Activated CD4-positive, alpha-beta T cell treated with anti-CD3 and anti-CD28 coated beads for 36 hours (primary cell): ENCODE measurements at regions of chr1 and their contacts with region 1.

Region 1: GRCh38 chr1:160607011-160607671 is 27.8 kb upstream of the CD84 start:
- DNase-seq: peak; percentile 72
- ATAC-seq: peak; percentile 94
- H3K4me3 Mint-ChIP-seq: no peak overlapping the region
- H3K27ac Mint-ChIP-seq: peak overlapping the region; percentile 85
- H3K4me1 Mint-ChIP-seq: peaks cover 54% of the 10 kb centered on the region
- H3K27me3 Mint-ChIP-seq: no peaks in the 10 kb centered on the region

Region 2: GRCh38 chr1:160193091-160193819 is 413.9 kb before region 1 on chr1:
- CTCF ChIA-PET with region 1: no interaction called
- POLR2A ChIA-PET with region 1: no interaction called
- intact Hi-C with region 1: loop called in 1 of 2 experiments (anchors 5 kb)
- DNase-seq: peak; percentile 90
- ATAC-seq: peak; percentile 89
- H3K4me3 Mint-ChIP-seq: no peak overlapping the region
- H3K27ac Mint-ChIP-seq: no peak overlapping the region
- H3K4me1 Mint-ChIP-seq: no peaks in the 10 kb centered on the region
- H3K27me3 Mint-ChIP-seq: no peaks in the 10 kb centered on the region

Region 3: GRCh38 chr1:160428655-160429054 is 178.5 kb before region 1 on chr1:
- CTCF ChIA-PET with region 1: interaction called, 18 read pairs
- POLR2A ChIA-PET with region 1: no interaction called
- intact Hi-C with region 1: loop called (anchors 1 kb)
- DNase-seq: peak; percentile 60
- ATAC-seq: peak; percentile 51
- H3K4me3 Mint-ChIP-seq: peak overlapping the region; percentile 32
- H3K27ac Mint-ChIP-seq: peak overlapping the region; percentile 94
- H3K4me1 Mint-ChIP-seq: peaks cover 63% of the 10 kb centered on the region
- H3K27me3 Mint-ChIP-seq: no peaks in the 10 kb centered on the region

Region 4: DNA sequence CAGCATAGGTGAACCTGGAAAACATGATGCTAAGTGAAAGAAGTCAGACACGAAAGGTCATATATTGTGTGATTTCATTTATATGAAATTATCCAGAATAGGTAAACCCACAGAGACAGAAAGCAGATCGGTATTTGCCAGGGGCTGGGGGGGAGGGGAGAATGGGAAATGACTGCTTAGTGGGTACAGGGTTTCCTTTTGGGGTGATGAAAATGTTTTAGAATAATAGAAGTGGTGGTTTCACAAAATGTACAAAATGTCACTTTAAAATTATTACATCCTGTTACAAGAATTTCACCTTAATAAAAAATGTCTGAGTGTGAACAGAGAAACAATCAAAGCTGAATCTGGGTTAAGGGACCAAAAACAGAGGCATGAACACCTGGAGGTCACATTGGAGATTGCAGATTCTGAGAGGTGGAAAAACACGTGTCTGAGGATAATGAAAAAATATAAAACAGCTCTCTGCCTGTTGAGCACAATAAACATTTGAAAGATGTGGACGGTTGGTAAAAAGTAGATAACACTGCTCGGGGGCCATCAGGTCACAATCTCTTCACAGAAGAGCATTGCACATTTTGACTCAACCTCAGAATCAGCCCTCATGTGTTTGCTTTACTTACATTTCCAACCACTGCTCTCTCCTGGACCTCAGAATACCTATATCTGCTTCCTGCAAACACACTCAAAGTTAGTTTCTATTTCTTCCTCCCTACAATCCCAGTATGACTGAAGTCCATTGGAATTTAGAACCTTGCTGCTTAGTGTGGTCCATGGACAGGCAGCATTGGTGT is 87.3 kb before region 1 on chr1:
- CTCF ChIA-PET with region 1: interaction called, 4 read pairs
- POLR2A ChIA-PET with region 1: no interaction called
- intact Hi-C with region 1: loop called (anchors 1 to 2 kb)
- DNase-seq: peak; percentile 54
- ATAC-seq: peak; percentile 70
- H3K4me3 Mint-ChIP-seq: peak overlapping the region; percentile 97
- H3K27ac Mint-ChIP-seq: peak overlapping the region; percentile 98
- H3K4me1 Mint-ChIP-seq: peaks cover 83% of the 10 kb centered on the region
- H3K27me3 Mint-ChIP-seq: no peaks in the 10 kb centered on the region

Region 5: GRCh38 chr1:160550572-160551034 is 56.5 kb before region 1 on chr1:
- CTCF ChIA-PET with region 1: interaction called, 150 read pairs
- POLR2A ChIA-PET with region 1: interaction called, 6 read pairs
- intact Hi-C with region 1: loop called in 1 of 2 experiments (anchors 1 kb)
- DNase-seq: peak; percentile 83
- ATAC-seq: peak; percentile 93
- H3K4me3 Mint-ChIP-seq: no peak overlapping the region
- H3K27ac Mint-ChIP-seq: peak overlapping the region; percentile 48
- H3K4me1 Mint-ChIP-seq: peaks cover 7% of the 10 kb centered on the region
- H3K27me3 Mint-ChIP-seq: no peaks in the 10 kb centered on the region

Region 6: DNA sequence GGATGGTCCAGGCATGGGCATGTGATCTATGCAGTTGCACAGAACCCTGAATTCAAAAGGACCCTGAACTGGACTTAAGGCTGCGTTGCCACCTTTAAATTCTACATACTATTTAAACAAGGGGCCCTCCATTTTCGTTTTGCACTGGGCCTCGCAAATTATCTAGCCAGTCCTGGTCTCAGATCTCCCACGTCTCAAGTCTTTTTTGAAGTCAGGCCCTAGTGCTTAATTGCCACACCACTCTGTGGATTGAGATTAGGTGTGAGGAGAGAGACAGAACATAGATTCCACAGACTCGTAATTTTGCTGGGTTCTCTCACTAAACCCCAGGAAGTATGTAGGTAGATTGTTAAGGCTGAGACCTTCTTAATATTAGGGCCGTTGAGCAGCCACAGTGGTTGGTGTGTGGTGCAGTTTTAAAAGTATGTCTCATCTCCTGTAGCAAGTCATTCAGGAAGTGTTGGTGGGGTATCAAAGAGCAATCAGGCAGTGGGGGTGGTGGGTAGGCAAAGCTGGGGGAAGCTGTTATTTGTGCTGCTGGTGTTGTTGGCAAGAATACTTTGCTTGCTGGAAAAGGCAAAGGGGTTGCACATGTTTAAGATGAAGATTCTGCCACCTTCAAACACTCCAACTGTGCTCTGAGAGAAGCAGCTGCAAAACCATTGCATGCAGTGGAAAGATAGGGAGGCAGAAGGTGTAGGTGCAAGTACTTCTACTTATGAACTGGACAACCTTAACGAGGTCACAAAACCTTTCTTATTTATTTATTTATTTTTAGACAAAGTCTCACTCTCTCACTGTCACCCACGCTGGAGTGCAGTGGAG is 39.1 kb before region 1 on chr1:
- CTCF ChIA-PET with region 1: interaction called, 13 read pairs
- POLR2A ChIA-PET with region 1: no interaction called
- intact Hi-C with region 1: no loop called
- DNase-seq: peak; percentile 79
- ATAC-seq: peak; percentile 95
- H3K4me3 Mint-ChIP-seq: peak overlapping the region; percentile 60
- H3K27ac Mint-ChIP-seq: peak overlapping the region; percentile 96
- H3K4me1 Mint-ChIP-seq: peaks cover 89% of the 10 kb centered on the region
- H3K27me3 Mint-ChIP-seq: no peaks in the 10 kb centered on the region

Region 7: GRCh38 chr1:160618763-160619274 is 11.7 kb after region 1 on chr1:
- CTCF ChIA-PET with region 1: interaction called, 18 read pairs
- POLR2A ChIA-PET with region 1: no interaction called
- intact Hi-C with region 1: no loop called
- DNase-seq: peak; percentile 65
- ATAC-seq: no peak
- H3K4me3 Mint-ChIP-seq: no peak overlapping the region
- H3K27ac Mint-ChIP-seq: peak overlapping the region; percentile 71
- H3K4me1 Mint-ChIP-seq: peaks cover 60% of the 10 kb centered on the region
- H3K27me3 Mint-ChIP-seq: no peaks in the 10 kb centered on the region